ENCODE measurements at regions of chr10 and their contacts with region 1.

Region 1: GRCh38 chr10:25016376-25017154 is at the start of gene THNSL1:
- DNase-seq: peak; percentile 96 to 99 (median 99)

Region 2: GRCh38 chr10:25080880-25081581 is 64.5 kb after region 1 on chr10:
- intact Hi-C with region 1: no loop called
- DNase-seq: peak; percentile 60 to 95 (median 86)

Region 3: GRCh38 chr10:25101461-25102146 is 85.0 kb after region 1 on chr10:
- intact Hi-C with region 1: no loop called
- DNase-seq: no peak

Region 4: GRCh38 chr10:25174461-25175230 is 158.1 kb after region 1 on chr10 and contains the start of gene GPR158:
- intact Hi-C with region 1: loop called (anchors 10 kb)
- DNase-seq: peak; percentile 86 to 97 (median 94)